ENCODE measurements at regions of chr14 and their contacts with region 1.

Region 1: DNA sequence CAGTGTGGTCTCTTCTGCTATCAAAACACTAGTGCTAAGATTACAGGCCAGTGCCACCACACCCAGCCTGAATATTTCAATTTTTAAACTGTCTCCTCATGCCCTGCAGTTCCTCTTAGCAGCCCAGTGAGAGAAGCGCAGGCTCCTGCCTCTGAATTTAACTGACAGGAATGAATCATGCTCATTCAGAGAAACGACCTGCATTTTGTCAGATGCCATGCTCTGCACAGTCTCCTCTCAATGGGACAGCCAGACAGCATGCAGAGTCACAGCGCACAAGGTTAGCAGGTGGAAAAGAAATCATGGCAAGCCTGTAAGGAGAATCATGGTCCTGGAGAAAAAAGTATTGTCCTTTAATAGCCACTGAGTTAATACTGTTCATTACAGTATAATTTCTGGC is 691.0 kb upstream of the SEL1L start:
- DNase-seq: no peak
- ATAC-seq: no peak

Region 2: GRCh38 chr14:80504781-80505180 is 1719.8 kb before region 1 on chr14:
- intact Hi-C with region 1: no loop called
- DNase-seq: no peak
- ATAC-seq: no peak

Region 3: DNA sequence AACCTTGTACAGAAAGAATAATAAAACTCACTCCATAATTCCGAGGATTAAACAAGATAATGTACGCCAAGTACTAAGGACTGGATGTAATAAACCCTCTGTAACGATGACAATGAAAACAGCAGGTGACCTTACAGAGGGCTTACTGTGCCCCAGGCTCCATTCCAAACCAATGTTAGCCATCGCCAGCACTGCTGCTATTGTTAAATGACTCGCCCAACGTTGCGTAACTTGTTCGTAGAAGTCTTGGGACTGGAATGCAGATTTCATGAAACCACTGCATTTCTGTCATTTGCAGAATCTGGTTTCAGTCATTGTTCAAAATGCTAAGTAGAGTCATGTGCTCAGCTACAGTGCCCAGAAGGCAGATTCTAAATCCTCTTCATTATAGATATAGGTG is 823.8 kb before region 1 on chr14:
- intact Hi-C with region 1: no loop called
- DNase-seq: peak; percentile 81
- ATAC-seq: peak; percentile 93

Region 4: GRCh38 chr14:83764656-83765055 is 1540.0 kb after region 1 on chr14:
- intact Hi-C with region 1: loop called (anchors 5 kb)
- DNase-seq: no peak
- ATAC-seq: no peak

Measured in sciatic nerve (tissue), 2 donors.